ENCODE measurements at regions of chr9 and their contacts with region 1.

Region 1: GRCh38 chr9:137046098-137046787 is at the start of gene NPDC1:
- DNase-seq: peak; percentile 94
- ATAC-seq: peak; percentile 69
- H3K4me3 Mint-ChIP-seq: peak within 1 kb of the TSS; percentile 77
- H3K27ac Mint-ChIP-seq: no peak within 1 kb of the TSS
- H3K4me1 Mint-ChIP-seq: peaks cover 10% of the 10 kb centered on the region
- H3K27me3 Mint-ChIP-seq: peaks cover 47% of the 10 kb centered on the region
- CTCF ChIP-seq: peak; percentile 83
- total RNA-seq, gene NPDC1: 64.3 to 68.8 TPM (median 64.5 TPM) in 3 replicates

Region 2: DNA sequence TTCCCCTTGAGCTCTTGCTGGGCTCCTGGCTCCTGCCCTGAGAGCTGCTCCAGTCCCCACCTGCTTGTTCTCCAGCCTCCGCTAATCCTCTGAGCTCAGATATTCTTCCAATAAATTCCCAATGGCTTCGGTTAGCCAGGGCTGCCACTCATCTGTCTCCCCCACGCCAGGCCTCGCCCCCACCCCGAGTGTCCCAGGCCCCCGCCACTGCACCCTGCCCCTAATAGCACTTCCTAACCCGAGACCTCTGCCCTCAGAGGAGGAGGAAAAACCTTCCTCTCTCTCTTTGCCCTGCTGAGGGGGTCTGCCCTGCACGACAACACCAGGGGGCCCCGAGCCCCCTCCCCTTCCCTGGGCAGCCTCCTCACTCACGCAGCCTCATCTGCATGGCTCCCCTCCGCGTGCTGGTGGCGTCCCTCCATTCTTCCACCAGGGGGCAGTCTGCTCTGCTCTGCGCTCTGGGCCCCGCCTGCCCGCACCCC is 276.5 kb before region 1 on chr9:
- CTCF ChIA-PET with region 1: no interaction called
- POLR2A ChIA-PET with region 1: no interaction called
- DNase-seq: peak; percentile 82
- ATAC-seq: peak; percentile 78
- H3K4me3 Mint-ChIP-seq: peak overlapping the region; percentile 47
- H3K27ac Mint-ChIP-seq: no peak overlapping the region
- H3K4me1 Mint-ChIP-seq: peaks cover 5% of the 10 kb centered on the region; the same call in 1 of the 2 replicates
- H3K27me3 Mint-ChIP-seq: peaks cover 14% of the 10 kb centered on the region
- CTCF ChIP-seq: peak; percentile 51

Region 3: DNA sequence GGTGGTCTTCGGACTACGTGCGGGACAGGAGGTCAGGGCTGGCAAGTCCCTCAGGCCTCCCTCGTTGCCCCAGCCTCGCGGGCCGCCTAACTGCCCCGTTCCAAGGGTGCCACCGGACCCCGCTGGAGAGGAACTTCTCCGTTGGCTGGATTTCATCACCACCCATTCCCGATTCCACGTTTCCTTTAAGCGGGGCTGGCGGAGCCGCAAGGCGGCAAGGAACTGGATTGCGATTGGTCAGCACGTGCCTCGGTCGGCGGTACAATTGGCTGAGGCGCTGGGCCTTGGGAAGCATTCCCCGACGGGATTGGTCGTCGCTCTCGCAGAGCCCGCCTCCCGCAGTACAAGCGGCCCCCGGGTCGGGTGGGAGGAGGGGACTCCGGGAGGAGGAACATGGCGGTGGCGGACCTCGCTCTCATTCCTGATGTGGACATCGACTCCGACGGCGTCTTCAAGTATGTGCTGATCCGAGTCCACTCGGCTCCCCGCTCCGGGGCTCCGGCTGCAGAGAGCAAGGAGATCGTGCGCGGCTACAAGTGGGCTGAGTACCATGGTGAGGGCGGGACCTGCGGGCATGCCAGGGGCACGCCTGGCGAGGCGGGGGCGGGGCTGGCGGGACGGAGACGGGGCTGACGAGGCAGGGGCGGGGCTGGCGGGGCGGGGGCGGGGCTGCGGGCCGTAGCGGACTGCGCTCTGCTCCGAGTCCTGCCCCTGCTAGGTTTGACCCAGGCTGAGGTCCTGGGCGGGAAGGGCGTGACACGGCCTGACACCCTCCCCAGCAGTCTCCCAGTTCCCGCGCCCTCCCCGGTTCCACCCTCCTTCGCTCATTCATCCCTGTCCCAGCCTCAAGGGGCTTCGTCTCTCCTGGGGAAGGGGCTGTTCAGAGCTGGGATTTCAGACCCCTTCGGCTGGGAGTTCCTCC is 196.9 kb before region 1 on chr9 and contains the start of gene PHPT1:
- CTCF ChIA-PET with region 1: interaction called, 11 read pairs
- POLR2A ChIA-PET with region 1: no interaction called
- DNase-seq: peak; percentile 99
- ATAC-seq: peak; percentile 75
- H3K4me3 Mint-ChIP-seq: peak within 1 kb of the TSS; percentile 94
- H3K27ac Mint-ChIP-seq: peak within 1 kb of the TSS; percentile 94
- H3K4me1 Mint-ChIP-seq: peaks cover 4% of the 10 kb centered on the region
- H3K27me3 Mint-ChIP-seq: peaks cover 3% of the 10 kb centered on the region
- CTCF ChIP-seq: no peak
- total RNA-seq, gene PHPT1: 138 to 176 TPM (median 173 TPM) in 3 replicates

Region 4: DNA sequence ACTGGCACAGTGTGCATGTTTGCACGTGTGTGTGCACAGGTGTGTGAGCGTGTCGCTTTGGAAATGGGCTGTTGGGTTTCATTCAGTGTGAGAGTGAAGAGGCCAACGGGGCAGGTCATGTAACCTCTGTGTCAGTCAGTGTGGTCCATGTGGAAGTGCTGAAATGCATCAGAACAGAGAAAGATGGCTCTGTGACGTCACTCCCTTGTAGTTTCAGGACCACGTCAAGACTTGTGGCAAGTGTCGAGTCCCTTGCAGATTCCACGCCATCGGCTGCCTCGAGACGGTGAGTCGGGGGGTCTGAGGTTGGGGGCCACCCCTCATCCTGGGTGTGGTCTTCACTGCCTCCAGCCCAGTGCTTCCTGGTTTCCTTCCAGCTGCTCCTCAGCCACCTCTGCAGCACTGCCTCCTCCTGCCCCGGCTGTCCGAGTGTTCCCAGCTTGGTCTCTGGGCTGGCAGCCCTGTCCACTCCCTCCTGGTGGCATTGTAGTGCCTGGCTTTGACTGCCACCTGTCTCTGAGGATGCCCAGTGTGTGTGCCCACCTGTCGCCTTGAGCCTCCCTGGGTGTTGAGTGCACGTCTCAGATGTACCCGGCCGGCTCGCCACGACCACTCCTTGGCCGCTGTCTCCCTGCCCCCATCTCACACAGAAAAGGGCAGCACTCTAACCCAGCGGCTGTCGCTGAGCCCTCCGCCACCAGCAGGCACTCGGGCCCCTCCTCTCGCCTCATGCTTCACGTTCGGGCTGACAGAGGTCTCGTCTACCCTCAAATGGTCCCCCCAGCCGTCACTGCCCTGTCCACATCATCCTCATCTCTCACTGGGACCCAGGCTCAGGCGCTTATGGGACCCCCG is 129.7 kb before region 1 on chr9:
- CTCF ChIA-PET with region 1: no interaction called
- POLR2A ChIA-PET with region 1: no interaction called
- DNase-seq: no peak
- ATAC-seq: no peak
- H3K4me3 Mint-ChIP-seq: no peak overlapping the region
- H3K27ac Mint-ChIP-seq: no peak overlapping the region
- H3K4me1 Mint-ChIP-seq: no peaks in the 10 kb centered on the region
- H3K27me3 Mint-ChIP-seq: no peaks in the 10 kb centered on the region
- CTCF ChIP-seq: no peak

Region 5: GRCh38 chr9:136978073-136978864 is 68.0 kb before region 1 on chr9:
- CTCF ChIA-PET with region 1: interaction called, 16 read pairs
- POLR2A ChIA-PET with region 1: no interaction called
- DNase-seq: peak; percentile 96
- ATAC-seq: peak; percentile 76
- H3K4me3 Mint-ChIP-seq: peak overlapping the region; percentile 66
- H3K27ac Mint-ChIP-seq: no peak overlapping the region
- H3K4me1 Mint-ChIP-seq: peaks cover 3% of the 10 kb centered on the region; the same call in 1 of the 2 replicates
- H3K27me3 Mint-ChIP-seq: peaks cover 3% of the 10 kb centered on the region; the same call in 1 of the 2 replicates
- CTCF ChIP-seq: no peak

Region 6: DNA sequence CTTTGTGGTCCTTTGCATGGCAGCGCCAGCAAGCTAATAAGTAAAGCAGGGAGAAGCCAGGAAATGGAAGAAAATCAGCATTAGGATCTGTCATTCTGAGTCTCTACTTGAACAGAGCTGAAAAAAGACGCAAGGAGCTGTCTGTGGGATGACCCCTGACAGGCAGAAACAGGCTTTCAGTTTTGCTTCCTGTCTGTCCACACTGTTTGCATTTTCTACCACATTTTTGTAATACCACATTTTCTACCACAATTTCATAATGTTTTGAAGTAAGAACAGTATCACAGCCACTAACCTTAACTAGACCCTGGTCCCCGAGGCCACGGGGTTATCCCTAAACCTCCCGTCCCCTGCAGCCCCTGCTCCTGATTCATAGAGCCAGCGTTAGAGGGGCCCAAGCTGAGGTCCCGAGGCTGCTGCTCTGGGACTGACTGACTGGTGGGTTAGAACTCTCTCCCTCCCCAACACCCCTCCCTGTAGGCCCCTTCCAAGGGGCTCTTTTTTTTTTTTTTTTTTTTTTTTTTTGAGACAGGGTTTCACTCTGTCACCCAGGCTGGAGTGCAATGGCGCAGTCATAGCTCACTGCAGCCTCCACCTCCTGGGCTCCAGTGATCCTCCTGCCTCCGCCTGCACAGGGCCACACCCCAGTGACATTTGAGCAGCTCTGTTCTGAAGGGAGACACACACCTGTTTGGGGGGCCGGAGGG is 45.9 kb before region 1 on chr9:
- CTCF ChIA-PET with region 1: interaction called, 13 read pairs
- POLR2A ChIA-PET with region 1: no interaction called
- DNase-seq: no peak
- ATAC-seq: no peak
- H3K4me3 Mint-ChIP-seq: no peak overlapping the region
- H3K27ac Mint-ChIP-seq: no peak overlapping the region
- H3K4me1 Mint-ChIP-seq: 0 out of 2 replicates have a peak, but pooled peaks cover 4% of the 10 kb centered on the region
- H3K27me3 Mint-ChIP-seq: peaks cover 6% of the 10 kb centered on the region; the same call in 1 of the 2 replicates
- CTCF ChIP-seq: no peak

Region 7: DNA sequence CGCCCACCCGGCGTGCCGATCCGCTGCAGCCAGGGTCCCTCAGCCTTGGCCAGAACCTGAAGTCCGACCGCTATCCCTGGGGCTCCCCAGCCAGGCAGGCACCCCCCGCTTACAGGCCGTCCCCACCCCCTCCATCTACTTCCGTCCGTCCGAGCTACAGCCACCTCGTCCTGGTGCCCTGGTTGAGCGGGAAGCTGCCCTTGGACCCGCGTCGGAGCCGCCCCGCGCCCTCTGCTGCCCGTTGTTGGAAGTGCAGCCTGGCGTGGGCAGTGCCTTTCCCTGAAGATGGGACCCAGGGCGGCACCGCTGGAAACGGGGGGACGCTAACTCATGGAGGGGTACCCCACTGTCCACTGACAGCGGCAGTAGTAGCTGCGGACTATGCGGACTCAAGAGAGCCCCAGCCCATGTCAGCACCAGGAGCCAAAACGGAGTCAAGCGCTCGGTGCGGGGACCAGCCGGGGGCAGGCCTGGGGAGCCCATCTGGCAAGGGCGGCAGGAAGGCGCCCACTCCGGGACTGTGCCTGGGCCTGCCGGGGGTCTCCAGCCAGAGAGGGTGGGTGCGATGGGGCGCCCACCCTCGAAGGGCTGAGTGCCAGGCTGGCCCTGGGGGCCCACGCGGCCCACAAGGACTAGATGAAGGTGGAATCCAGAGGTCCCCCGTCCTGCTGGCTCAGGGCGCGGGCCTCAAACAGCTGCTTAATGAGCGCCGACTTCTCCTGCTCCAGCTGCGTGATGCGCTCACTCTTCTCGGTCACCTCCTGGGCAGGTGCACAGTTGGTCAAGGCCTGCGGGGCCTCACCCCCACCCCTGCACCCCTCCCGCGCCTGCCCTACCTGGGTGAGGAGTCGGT is 18.0 kb after region 1 on chr9:
- CTCF ChIA-PET with region 1: interaction called, 179 read pairs
- POLR2A ChIA-PET with region 1: interaction called, 3 read pairs
- DNase-seq: peak; percentile 84
- ATAC-seq: peak; percentile 51
- H3K4me3 Mint-ChIP-seq: no peak overlapping the region
- H3K27ac Mint-ChIP-seq: no peak overlapping the region
- H3K4me1 Mint-ChIP-seq: peaks cover 12% of the 10 kb centered on the region
- H3K27me3 Mint-ChIP-seq: peaks cover 6% of the 10 kb centered on the region
- CTCF ChIP-seq: peak; percentile 99

Region 8: DNA sequence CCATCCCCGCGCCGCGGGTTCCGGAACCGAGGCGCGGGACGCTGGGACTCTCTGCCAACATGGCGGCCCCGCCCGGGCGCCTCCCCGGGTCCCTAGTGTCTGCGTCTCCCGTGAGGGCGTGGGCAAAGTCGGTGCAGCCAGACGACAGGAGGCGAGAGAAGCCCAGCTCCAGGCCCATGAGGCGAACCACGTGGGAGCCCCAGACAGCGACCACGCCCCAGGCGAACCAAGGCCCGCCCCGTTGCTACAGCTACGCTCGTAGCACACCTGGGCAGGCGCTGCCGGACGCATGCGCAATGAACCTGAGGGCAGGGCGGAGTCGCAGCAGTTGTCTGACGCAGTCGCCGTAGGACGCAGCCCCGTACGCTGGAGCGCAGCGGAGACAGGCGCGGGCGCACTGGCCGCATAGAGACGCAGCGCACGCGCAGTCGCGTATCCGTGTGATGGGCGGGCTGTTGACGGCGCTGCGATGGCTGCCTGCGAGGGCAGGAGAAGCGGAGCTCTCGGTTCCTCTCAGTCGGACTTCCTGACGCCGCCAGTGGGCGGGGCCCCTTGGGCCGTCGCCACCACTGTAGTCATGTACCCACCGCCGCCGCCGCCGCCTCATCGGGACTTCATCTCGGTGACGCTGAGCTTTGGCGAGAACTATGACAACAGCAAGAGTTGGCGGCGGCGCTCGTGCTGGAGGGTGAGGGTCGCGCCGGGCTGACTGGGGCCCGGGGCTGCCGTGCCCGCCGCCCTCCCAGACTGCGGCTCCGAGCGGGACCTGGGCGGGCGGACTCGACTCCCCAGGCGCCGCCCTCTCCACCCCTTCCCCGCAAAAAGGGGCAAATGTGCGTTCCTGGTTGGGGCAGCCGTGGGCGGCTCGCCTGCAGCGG is 40.5 kb after region 1 on chr9 and contains the start of gene MAN1B1:
- CTCF ChIA-PET with region 1: interaction called, 29 read pairs
- POLR2A ChIA-PET with region 1: no interaction called
- DNase-seq: peak; percentile 99
- ATAC-seq: peak; percentile 95
- H3K4me3 Mint-ChIP-seq: peak within 1 kb of the TSS; percentile 85
- H3K27ac Mint-ChIP-seq: peak within 1 kb of the TSS; percentile 91
- H3K4me1 Mint-ChIP-seq: peaks cover 16% of the 10 kb centered on the region
- H3K27me3 Mint-ChIP-seq: peaks cover 9% of the 10 kb centered on the region
- CTCF ChIP-seq: no peak
- total RNA-seq, gene MAN1B1: 44.9 to 57.1 TPM (median 47.1 TPM) in 3 replicates

Region 9: DNA sequence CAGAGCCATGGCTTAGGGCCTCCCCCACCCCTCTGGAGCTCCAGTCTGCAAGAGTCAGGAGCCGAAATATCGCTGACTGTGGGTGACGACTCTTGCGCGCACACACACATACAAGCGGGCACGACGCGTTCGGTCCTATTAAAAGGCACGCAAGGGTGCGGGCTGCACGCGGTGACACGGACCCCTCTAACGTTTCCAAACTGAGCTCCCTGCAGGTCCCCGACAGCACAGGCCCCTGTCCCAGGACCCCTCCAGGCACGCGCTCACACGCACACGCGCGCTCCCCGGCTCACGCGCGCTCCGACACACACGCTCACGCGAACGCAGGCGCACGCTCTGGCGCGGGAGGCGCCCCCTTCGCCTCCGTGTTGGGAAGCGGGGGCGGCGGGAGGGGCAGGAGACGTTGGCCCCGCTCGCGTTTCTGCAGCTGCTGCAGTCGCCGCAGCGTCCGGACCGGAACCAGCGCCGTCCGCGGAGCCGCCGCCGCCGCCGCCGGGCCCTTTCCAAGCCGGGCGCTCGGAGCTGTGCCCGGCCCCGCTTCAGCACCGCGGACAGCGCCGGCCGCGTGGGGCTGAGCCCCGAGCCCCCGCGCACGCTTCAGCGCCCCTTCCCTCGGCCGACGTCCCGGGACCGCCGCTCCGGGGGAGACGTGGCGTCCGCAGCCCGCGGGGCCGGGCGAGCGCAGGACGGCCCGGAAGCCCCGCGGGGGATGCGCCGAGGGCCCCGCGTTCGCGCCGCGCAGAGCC is 92.7 kb after region 1 on chr9 and contains the start of gene GRIN1:
- CTCF ChIA-PET with region 1: interaction called, 14 read pairs
- POLR2A ChIA-PET with region 1: no interaction called
- DNase-seq: peak; percentile 55
- ATAC-seq: peak; percentile 25
- H3K4me3 Mint-ChIP-seq: peak within 1 kb of the TSS; percentile 55
- H3K27ac Mint-ChIP-seq: no peak within 1 kb of the TSS
- H3K4me1 Mint-ChIP-seq: peaks cover 6% of the 10 kb centered on the region; the same call in 1 of the 2 replicates
- H3K27me3 Mint-ChIP-seq: peaks cover 75% of the 10 kb centered on the region
- CTCF ChIP-seq: no peak
- total RNA-seq, gene GRIN1: 4.0 to 6.6 TPM (median 4.1 TPM) in 3 replicates

Region 10: DNA sequence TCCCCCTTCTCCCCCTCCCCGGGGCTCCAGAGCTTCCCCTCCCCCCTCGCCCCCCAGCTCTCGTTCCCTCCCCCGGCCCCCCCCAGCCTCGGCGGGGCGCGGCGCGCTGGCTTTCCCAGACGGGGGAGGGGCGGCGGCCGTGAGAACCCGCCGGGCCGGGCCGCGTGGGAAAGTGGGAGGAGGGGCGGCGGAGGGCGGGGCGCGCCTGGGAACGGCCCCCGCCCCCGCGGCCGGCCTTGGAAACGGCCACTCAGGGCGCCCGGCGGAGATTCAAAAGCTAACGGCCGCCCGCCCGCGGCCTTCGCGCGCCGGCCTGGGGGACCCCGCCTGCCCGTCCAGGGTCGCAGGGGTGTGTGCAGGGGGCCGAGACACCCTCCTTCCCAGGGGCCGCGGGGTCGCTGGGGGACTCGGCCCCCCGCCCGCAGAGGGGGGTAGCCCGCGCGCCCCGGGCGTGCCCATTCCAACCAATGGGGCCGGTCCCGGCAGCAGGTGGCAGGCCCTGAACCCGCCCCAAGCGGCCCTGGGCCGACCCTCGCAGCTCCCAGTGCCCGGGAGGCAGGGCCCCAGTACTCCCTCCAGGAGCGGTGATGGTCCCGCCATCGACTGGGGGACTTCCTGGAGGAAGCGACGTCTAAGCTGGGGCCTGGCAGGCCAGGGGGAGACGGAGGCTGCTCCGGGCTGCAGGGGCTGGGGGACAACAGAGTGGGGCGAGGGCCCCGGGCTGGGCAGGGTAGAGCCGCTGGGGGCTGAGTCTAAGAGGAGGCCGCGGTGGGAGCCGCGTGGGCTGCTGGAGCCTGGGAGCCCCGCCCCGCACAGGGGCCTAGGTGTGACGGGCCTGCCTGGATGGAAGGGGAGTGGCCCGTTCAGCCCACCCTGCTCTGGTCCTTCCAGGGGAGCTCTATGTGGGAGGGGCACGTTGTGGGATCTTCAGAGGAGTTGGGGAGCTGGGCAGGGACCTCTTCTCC is 270.1 kb after region 1 on chr9:
- CTCF ChIA-PET with region 1: no interaction called
- POLR2A ChIA-PET with region 1: no interaction called
- DNase-seq: peak; percentile 63
- ATAC-seq: peak; percentile 62
- H3K4me3 Mint-ChIP-seq: 0 out of 2 replicates have a peak overlapping the region, but pooled peaks have one; percentile 20
- H3K27ac Mint-ChIP-seq: no peak overlapping the region
- H3K4me1 Mint-ChIP-seq: peaks cover 7% of the 10 kb centered on the region; the same call in 1 of the 2 replicates
- H3K27me3 Mint-ChIP-seq: no peaks in the 10 kb centered on the region
- CTCF ChIP-seq: no peak

Measured in WTC11 (cell line).